Activated CD4-positive, alpha-beta T cell treated with anti-CD3 and anti-CD28 coated beads, Interleukin-2, amount 10 ng/mL, durations not matched to agents 7 days and 5 days (primary cell): ENCODE measurements at regions of chr12 and their contacts with region 1.

Region 1: DNA sequence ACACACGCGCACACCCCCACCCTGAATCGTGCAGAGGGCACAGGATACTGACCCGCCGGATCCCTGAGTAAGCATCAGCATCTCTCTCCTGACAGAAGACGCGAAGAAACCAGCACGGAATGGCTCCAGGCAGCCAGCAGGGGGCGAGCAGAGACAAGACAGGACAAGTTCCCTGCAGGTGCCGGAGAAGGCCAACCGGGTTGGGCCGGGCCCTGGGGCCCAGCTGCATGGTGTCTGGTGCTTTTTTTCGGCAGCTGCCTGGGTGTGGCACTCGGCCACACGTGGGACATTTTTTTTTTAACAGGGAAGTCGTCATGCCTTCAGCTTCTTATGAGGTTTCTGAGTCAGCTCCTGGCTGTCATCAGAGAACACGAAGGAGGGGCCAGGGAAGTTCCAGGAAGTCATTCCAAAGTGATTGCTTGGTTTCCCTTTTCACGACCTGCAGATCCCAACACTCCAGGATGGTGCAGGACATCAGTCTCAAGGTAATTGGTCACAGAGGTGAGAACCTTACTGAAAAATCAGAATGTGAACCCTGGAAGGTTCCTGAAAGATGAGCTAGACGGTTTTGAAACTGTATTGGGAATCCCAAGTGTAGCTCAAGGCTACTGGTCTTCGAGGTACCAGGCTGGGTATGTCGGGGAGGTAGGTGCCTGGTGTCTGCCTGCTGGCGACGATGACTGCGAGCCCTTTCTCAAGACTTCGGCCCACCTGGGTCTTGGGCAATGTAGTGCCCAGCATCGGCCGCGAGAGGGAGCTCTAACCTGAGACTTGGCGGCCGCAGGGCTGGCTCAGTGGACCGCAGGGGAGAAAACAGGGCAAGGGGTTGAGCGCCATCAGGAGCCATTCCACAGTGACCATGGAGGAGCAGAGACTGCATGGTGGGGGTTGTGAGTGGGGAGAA is 190.8 kb upstream of the PRMT8 start:
- DNase-seq: peak; percentile 88
- H3K4me3 Mint-ChIP-seq: no peak overlapping the region
- H3K27ac Mint-ChIP-seq: peak overlapping the region; percentile 48
- H3K4me1 Mint-ChIP-seq: peaks cover 13% of the 10 kb centered on the region
- H3K27me3 Mint-ChIP-seq: peaks cover 3% of the 10 kb centered on the region

Region 2: GRCh38 chr12:3275171-3276041 is 24.8 kb before region 1 on chr12:
- CTCF ChIA-PET with region 1: interaction called, 13 read pairs
- POLR2A ChIA-PET with region 1: no interaction called
- DNase-seq: peak; percentile 76
- H3K4me3 Mint-ChIP-seq: no peak overlapping the region
- H3K27ac Mint-ChIP-seq: no peak overlapping the region
- H3K4me1 Mint-ChIP-seq: no peaks in the 10 kb centered on the region
- H3K27me3 Mint-ChIP-seq: no peaks in the 10 kb centered on the region

Region 3: GRCh38 chr12:3313675-3314663 is 13.8 kb after region 1 on chr12:
- CTCF ChIA-PET with region 1: interaction called, 16 read pairs
- POLR2A ChIA-PET with region 1: no interaction called
- DNase-seq: peak; percentile 29
- H3K4me3 Mint-ChIP-seq: no peak overlapping the region
- H3K27ac Mint-ChIP-seq: no peak overlapping the region
- H3K4me1 Mint-ChIP-seq: no peaks in the 10 kb centered on the region
- H3K27me3 Mint-ChIP-seq: no peaks in the 10 kb centered on the region

Region 4: DNA sequence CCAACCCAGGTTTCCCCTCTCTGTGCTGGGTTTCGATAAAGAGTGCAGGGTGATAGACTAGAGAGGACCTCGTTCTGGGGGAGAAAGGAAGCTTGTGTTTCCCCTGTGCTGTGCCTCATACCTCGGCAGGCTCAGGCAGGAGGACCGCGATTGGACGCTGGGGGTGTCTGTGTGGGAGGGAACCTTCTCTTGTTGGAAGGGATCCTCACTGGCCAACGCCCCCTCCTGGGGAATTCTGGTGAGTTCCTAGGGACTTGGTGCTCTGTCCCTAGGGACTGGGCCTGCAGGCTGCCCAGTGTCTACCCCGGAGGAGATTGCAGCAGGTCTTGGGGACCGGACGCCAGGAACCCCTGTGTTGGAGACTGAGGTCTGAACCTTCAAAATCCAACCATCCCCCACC is 33.4 kb after region 1 on chr12:
- CTCF ChIA-PET with region 1: no interaction called
- POLR2A ChIA-PET with region 1: no interaction called
- DNase-seq: no peak
- H3K4me3 Mint-ChIP-seq: no peak overlapping the region
- H3K27ac Mint-ChIP-seq: no peak overlapping the region
- H3K4me1 Mint-ChIP-seq: no peaks in the 10 kb centered on the region
- H3K27me3 Mint-ChIP-seq: peaks cover 2% of the 10 kb centered on the region

Region 5: GRCh38 chr12:3398196-3398789 is 98.1 kb after region 1 on chr12:
- CTCF ChIA-PET with region 1: no interaction called
- POLR2A ChIA-PET with region 1: no interaction called
- DNase-seq: no peak
- H3K4me3 Mint-ChIP-seq: no peak overlapping the region
- H3K27ac Mint-ChIP-seq: no peak overlapping the region
- H3K4me1 Mint-ChIP-seq: no peaks in the 10 kb centered on the region
- H3K27me3 Mint-ChIP-seq: peaks cover 15% of the 10 kb centered on the region

Region 6: DNA sequence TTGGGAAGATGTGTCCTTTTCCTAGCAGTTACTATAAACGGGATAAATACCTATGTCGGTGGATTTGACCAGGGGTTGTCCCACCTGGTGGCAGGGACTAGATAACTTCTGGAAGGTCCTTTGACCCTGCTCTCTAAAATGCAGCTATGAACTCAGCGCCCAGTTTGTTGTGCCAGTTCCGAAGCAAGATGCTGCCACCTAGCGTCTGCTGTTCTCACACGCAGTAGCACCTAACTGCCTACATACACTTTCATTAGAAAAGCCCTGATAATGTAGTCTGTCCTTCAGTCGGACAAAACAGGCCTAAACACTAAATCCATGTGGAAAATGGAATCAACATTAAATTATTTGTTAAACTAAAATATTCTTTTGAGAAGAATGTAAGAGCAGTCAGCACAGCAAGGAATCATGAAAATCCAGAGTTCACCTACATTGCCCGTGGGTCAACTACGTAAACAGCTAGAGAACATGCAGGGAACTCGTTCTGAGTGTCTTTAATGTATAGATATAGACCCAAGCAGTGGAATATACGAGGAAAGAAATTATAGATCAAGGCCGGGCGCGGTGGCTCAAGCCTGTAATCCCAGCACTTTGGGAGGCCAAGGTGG is 503.8 kb after region 1 on chr12:
- CTCF ChIA-PET with region 1: interaction called, 34 read pairs
- POLR2A ChIA-PET with region 1: no interaction called
- DNase-seq: peak; percentile 81
- H3K4me3 Mint-ChIP-seq: no peak overlapping the region
- H3K27ac Mint-ChIP-seq: no peak overlapping the region
- H3K4me1 Mint-ChIP-seq: peaks cover 7% of the 10 kb centered on the region
- H3K27me3 Mint-ChIP-seq: no peaks in the 10 kb centered on the region